GM10248 (cell line): ENCODE measurements at regions of chr5 and their contacts with region 1.

Region 1: DNA sequence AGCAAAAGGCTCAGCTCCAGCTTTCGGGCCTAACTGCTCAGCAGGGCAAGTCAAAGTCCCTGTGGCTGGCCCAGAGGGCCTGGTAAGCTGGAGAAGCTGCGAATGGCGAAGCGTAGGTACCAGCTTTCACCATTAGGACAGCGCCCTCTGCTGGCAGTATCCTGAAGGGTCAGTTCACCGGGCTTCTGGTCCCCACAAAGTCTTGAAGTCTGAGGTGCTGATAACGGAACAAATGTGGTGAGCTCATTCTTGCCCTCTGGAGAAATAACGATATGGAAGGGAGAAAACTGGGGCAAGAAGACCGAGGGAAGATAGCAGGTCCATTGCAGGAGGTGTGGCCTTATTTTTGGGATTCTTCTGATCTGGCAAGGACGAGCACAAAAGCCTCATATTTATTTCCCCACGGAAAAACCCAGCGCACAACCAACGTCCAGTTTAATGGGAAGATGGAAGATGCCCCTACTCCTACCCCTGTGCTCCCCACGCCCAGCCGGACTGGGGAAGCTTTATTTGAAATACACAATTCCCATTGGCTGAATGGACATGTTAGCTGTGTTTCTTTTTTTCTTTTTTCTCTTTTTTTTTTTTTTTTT is 7.2 kb downstream of the SOWAHA start:
- DNase-seq: peak; percentile 90
- CTCF ChIP-seq: peak; percentile 88

Region 2: DNA sequence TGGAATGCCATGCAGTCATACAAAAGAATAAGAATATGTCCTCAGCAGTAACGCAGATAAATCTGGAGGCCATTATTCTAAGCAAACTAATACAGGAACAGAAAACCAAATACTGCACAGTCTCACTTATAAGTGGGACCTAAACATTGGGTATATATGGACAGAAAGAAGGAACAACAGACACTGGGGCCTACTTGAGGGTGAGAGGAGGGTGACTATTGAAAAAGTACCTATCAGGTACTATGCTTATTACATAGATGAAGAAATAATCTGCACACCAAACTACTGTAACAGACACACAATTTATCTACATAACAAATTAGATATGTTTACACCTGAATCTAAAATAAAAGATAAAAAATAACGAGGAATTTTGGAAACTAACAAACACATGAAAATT is 913.6 kb before region 1 on chr5:
- CTCF ChIA-PET with region 1: no interaction called
- POLR2A ChIA-PET with region 1: no interaction called
- DNase-seq: no peak
- CTCF ChIP-seq: no peak

Region 3: DNA sequence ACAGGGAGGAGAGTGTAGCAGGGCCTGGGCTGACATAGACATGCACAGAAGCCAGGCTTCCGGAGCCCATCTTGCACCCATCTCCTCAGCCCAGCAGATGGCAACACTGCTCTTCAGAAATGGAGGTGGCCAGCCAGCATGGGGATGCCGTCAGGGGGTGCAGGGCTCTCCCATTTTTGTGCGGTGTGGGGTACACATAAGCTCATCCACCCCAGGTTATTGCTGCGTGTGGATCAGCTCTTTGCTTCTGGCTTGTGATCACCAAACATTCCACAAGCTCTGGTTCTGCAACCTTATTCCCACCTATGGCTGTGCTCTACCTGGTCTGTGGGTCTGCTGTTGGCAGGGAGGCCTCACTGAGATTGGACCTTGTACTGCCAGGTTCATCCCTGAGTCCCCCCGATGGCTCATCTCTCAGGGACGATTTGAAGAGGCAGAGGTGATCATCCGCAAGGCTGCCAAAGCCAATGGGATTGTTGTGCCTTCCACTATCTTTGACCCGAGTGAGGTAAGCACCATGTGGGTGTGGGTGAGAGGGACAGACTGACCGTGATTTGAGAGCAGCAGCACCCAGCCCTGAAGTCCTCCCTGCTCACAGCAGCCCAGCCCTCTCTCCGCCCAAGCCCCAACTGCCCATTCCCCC is 433.5 kb before region 1 on chr5:
- CTCF ChIA-PET with region 1: interaction called, 30 read pairs
- POLR2A ChIA-PET with region 1: no interaction called
- DNase-seq: peak; percentile 87
- CTCF ChIP-seq: peak; percentile 89

Region 4: GRCh38 chr5:132526290-132526973 is 293.8 kb before region 1 on chr5:
- CTCF ChIA-PET with region 1: interaction called, 67 read pairs
- POLR2A ChIA-PET with region 1: no interaction called
- DNase-seq: peak; percentile 61
- CTCF ChIP-seq: peak; percentile 64

Region 5: DNA sequence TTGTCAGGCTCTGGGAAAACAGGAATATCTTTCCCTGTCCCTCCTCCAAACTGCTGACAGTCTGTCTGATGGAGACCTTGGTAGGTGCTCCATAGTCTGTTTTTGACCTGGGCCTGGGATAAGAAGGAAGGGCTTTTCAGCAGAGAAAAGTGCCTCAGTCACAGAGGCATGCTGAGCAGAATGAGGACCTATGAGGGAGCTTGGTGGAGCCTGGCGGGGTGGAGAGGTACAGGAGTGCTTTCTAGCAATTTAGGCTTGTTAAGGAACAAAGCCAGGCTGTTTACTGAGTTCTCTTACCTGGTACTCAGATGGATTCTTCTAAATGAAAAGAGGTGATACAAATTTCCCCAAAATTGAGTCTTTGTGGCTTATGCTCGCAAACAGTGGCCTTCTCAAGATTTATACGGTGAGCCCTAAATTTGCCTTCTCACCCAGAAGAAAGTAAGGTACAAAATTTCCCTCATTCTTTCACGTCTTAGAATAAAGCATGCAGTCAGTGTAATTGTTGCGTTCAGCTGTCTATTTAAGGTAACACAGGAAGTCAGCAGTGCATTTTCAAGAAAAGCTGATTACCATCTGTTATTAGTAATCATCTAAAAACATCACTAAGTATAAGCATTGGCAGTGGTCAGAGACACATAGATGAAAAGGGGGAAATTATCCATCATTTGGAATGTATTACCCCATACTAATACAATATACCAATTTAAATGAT is 190.9 kb before region 1 on chr5:
- CTCF ChIA-PET with region 1: interaction called, 15 read pairs
- POLR2A ChIA-PET with region 1: no interaction called
- DNase-seq: peak; percentile 51
- CTCF ChIP-seq: no peak

Region 6: DNA sequence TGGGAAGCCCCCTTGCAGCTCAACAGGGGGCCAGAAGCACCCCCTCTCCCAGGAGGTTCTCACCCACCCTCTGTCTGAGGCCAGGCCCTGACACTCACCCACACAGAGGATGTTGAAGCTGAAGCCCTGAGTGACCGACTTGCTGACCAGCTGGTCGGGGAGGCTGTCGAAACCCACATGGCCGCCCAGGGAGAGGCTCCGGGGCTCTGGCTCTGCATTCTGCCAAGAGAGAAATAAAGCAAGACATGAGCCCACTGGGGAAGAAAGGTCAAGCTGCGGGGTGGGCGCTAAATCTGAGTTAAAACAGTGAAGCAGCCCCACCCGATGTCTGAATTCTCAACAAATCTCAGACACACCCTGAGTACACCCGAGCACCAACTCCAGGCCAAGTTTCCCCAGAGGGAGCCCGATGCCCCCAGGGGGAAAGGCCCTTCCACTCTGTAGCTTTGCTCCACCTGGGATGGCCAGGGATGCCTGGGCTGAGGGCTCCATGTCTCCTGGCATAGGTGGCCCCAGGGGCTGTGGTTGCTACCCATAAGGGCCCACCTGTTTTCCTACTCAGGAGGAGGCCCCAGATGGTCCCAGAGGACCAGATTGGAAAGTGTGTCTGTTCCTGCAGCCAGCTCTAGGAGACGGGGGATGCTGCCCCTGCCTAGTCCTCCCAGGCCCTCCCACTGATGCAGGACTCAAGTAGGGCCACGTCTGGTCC is 54.8 kb before region 1 on chr5:
- CTCF ChIA-PET with region 1: interaction called, 10 read pairs
- POLR2A ChIA-PET with region 1: no interaction called
- DNase-seq: no peak
- CTCF ChIP-seq: no peak

Region 7: GRCh38 chr5:132791026-132791425 is 29.2 kb before region 1 on chr5:
- CTCF ChIA-PET with region 1: interaction called, 11 read pairs
- POLR2A ChIA-PET with region 1: no interaction called
- DNase-seq: no peak
- CTCF ChIP-seq: no peak

Region 8: DNA sequence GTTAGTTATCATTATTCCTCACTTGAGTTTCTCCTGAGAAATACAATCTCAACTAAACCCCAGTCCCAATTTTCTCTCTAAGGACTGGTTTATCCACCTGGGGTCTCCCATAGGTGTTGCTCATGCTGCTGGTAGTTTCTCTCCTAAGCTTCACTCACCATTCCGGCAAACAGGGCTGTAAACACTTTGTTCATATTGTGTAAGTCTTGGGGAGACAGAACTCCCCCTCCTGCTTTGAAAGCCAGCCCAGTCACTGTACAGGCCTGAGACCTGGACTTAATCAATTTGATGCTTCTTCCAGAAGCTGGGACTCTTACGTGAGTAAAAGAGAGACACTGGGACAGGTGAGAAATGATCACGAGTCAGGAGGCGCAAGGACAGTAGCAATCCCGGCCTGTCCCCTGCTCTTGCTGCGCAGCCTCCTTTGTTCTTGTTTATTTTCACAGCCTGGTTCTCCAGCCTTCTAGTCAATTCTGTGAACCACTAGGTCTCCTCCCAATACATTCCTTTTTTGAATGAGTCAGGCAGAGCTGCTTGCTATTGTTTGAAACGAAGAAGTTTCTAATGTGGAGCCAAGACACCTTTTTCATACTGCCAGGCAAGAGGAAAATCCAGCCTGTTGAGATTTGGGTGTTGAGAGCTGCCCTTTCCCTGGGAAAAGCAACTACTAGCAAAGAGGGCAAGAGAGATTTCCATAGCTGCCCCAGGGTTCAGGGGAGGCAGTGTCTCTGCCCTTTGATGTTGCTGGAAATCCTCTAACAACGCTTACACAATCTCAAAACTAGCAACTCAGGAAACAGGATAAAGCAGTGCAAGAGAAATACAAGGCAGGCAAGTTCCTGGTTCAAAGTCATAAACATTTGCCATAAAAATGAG is 19.4 kb after region 1 on chr5:
- CTCF ChIA-PET with region 1: interaction called, 98 read pairs
- POLR2A ChIA-PET with region 1: no interaction called
- DNase-seq: no peak
- CTCF ChIP-seq: no peak